B cell (primary cell): ENCODE measurements at regions of chr18 and their contacts with region 1.

Region 1: GRCh38 chr18:26073758-26074157 is 16.7 kb downstream of the SS18 start:
- DNase-seq: no peak
- ATAC-seq: no peak
- H3K4me3 ChIP-seq: no peak overlapping the region
- H3K4me3 Mint-ChIP-seq: no peak overlapping the region
- H3K27ac ChIP-seq: no peak overlapping the region
- H3K27ac Mint-ChIP-seq: no peak overlapping the region
- H3K4me1 ChIP-seq: no peaks in the 10 kb centered on the region
- H3K4me1 Mint-ChIP-seq: peaks cover 28% of the 10 kb centered on the region
- H3K27me3 ChIP-seq: no peaks in the 10 kb centered on the region
- H3K27me3 Mint-ChIP-seq: no peaks in the 10 kb centered on the region
- CTCF ChIP-seq: no peak

Region 2: GRCh38 chr18:26034850-26035497 is 38.8 kb before region 1 on chr18:
- CTCF ChIA-PET with region 1: no interaction called
- POLR2A ChIA-PET with region 1: no interaction called
- intact Hi-C with region 1: loop called (anchors 5 kb)
- DNase-seq: no peak
- ATAC-seq: no peak
- H3K4me3 ChIP-seq: no peak overlapping the region
- H3K4me3 Mint-ChIP-seq: no peak overlapping the region
- H3K27ac ChIP-seq: no peak overlapping the region
- H3K27ac Mint-ChIP-seq: no peak overlapping the region
- H3K4me1 ChIP-seq: no peaks in the 10 kb centered on the region
- H3K4me1 Mint-ChIP-seq: no peaks in the 10 kb centered on the region
- H3K27me3 ChIP-seq: no peaks in the 10 kb centered on the region
- H3K27me3 Mint-ChIP-seq: no peaks in the 10 kb centered on the region
- CTCF ChIP-seq: no peak

Region 3: GRCh38 chr18:26133652-26134051 is 59.9 kb after region 1 on chr18 and contains the start of gene PSMA8:
- CTCF ChIA-PET with region 1: no interaction called
- POLR2A ChIA-PET with region 1: no interaction called
- intact Hi-C with region 1: no loop called
- DNase-seq: peak; percentile 64
- ATAC-seq: peak; percentile 74
- H3K4me3 ChIP-seq: peak within 1 kb of the TSS in 4 of 5 experiments; percentile 14 to 51 (median 42)
- H3K4me3 Mint-ChIP-seq: peak within 1 kb of the TSS; percentile 83
- H3K27ac ChIP-seq: peak within 1 kb of the TSS; percentile 40 to 57
- H3K27ac Mint-ChIP-seq: peak within 1 kb of the TSS; percentile 76
- H3K4me1 ChIP-seq: no peaks in the 10 kb centered on the region
- H3K4me1 Mint-ChIP-seq: peaks cover 13% of the 10 kb centered on the region
- H3K27me3 ChIP-seq: no peaks in the 10 kb centered on the region
- H3K27me3 Mint-ChIP-seq: no peaks in the 10 kb centered on the region
- CTCF ChIP-seq: no peak
- total RNA-seq, gene PSMA8: 0.91 and 1.0 TPM in 2 replicates

Region 4: GRCh38 chr18:26159353-26159752 is 85.6 kb after region 1 on chr18:
- CTCF ChIA-PET with region 1: interaction called, 3 read pairs
- POLR2A ChIA-PET with region 1: no interaction called
- intact Hi-C with region 1: loop called (anchors 5 kb)
- DNase-seq: peak; percentile 35
- ATAC-seq: no peak
- H3K4me3 ChIP-seq: no peak overlapping the region
- H3K4me3 Mint-ChIP-seq: no peak overlapping the region
- H3K27ac ChIP-seq: no peak overlapping the region
- H3K27ac Mint-ChIP-seq: no peak overlapping the region
- H3K4me1 ChIP-seq: peaks cover 0 to 4% of the 10 kb centered on the region in 2 donors
- H3K4me1 Mint-ChIP-seq: peaks cover 6% of the 10 kb centered on the region
- H3K27me3 ChIP-seq: no peaks in the 10 kb centered on the region
- H3K27me3 Mint-ChIP-seq: no peaks in the 10 kb centered on the region
- CTCF ChIP-seq: peak; percentile 62